ENCODE measurements at regions of chr1 and their contacts with region 1.

Region 1: DNA sequence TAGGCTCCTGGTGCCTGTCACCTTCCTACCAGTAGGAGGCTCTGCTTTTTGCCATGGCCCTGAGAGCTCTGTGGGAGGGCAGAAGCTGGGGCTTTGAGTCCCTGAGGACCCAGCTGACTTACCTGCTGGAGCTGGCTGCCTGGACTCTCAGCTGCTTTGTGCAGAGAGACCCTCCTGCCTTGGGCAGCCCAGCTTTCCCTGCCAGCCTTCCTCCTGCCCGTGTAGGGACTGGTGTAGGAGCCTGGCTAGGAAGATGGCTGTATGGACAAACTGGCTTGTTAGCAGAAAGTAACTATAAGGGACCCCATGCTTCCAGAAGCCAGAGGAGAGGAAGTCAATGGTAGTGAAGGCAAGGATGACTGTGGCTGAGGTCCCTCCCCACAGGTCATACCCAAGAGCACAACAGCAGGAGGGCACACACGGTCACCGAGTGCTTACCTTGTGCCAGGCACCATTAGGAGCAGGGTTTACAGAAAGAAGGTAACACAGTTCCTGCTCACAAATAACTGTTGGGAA is 9.7 kb upstream of the CELSR2 start:
- DNase-seq: peak; percentile 78

Region 2: DNA sequence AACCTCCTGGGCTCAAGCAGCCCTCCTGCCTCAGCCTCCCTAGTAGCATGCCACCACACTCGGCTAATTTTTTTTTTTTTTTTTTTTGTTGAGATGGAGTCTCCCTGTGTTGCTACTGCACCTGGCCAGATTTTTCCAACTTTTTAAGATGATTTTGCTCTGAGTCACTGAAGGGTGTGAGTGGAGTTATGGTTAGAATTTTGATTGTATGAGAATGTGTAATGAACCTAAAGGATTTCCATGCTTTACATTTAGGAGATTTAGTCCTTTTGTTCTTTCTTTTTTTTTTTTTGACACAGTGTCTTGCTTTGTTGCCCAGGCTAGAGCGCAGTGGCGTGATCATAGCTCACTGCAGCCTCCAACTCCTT is 13.6 kb before region 1 on chr1:
- CTCF ChIA-PET with region 1: interaction called, 23 read pairs
- POLR2A ChIA-PET with region 1: no interaction called
- DNase-seq: no peak

Measured in HEK293T (cell line).